ENCODE measurements at regions of chr16 and their contacts with region 1.

Region 1: DNA sequence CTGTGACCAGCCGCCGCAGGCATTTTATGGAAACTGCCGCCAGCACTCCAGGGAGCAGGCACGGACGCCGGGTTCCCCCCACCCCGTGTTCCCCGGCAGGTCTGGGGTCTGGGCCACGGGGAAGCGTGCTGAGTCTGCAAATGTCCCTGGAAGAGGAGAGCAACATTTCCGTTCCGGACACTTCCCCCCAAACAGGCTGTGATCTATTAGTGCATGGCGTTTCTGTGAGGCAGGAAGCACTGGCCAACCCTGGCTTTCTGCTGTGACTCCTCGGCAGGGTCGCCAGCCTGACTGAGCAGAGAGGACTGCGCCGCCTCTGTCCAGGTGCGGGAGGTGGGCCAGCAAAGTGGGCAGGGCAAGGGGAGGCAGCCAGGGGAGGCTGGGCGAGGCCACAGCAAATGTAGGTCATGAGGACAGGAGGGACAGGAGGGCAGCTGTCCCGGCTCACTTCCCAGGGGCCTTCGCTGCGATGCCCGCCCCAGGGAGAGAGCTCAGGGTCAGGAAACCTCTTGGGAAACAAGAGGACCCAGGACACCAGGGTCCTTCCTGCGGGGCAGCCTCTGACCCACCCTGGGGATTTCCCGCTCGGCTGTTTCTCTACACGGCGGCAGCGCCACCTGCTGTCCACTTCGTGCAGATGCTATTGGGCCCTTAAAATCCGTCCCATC is 9.5 kb downstream of the FOXF1 start:
- DNase-seq: peak in 1 of 2 donors; percentile 90
- ATAC-seq: no peak
- H3K4me3 ChIP-seq: no peak overlapping the region
- H3K27ac ChIP-seq: no peak overlapping the region
- H3K4me1 ChIP-seq: no peaks in the 10 kb centered on the region
- H3K27me3 ChIP-seq: no peaks in the 10 kb centered on the region

Region 2: DNA sequence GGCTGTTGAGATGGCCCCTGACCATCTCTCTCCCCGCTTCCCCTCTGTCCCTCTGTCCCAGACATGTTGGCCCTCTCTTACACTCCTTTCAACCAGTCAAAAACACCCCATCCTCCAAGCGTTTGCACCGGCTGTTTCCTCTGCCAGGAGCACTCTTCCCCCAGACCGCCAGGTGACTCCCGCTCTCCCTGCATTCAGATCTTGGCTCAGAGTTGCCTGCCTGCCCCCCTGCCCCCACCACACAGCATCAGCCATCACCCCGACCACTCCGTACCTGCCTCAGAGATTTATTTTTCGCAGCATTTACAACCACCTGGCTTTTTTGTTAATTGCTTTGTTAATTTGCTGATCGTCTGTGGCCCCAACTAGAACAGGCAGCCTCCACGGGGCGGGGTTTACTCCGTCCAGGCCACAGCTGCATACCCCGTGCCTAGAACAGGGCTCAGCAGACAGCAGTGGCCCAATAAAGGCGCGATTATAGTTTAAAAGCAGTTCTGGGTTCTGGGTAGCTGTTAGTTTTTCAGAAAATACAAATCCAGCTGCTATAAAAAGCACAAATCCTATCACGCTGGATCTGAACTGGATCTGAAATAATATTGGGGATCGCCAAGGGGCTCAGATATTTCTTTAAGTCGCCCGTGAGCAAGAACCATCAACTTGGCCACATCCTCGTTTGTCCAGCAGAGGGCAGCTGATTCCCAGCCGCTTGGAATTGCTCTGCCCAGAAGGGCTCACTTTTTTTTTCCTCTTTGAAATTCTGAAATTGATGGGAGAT is 447.3 kb before region 1 on chr16:
- intact Hi-C with region 1: loop called (anchors 1 to 2 kb)
- DNase-seq: peak; percentile 72 to 86
- ATAC-seq: no peak
- H3K4me3 ChIP-seq: no peak overlapping the region
- H3K27ac ChIP-seq: no peak overlapping the region
- H3K4me1 ChIP-seq: no peaks in the 10 kb centered on the region
- H3K27me3 ChIP-seq: no peaks in the 10 kb centered on the region

Region 3: GRCh38 chr16:86534779-86535615 is 15.2 kb after region 1 on chr16:
- intact Hi-C with region 1: no loop called
- DNase-seq: peak in 1 of 2 donors; percentile 38
- ATAC-seq: no peak
- H3K4me3 ChIP-seq: no peak overlapping the region
- H3K27ac ChIP-seq: no peak overlapping the region
- H3K4me1 ChIP-seq: no peaks in the 10 kb centered on the region
- H3K27me3 ChIP-seq: no peaks in the 10 kb centered on the region

Measured in aorta (tissue), 5 donors.